Dorsolateral prefrontal cortex (tissue), 120 donors: ENCODE measurements at regions of chr2 and their contacts with region 1.

Region 1: DNA sequence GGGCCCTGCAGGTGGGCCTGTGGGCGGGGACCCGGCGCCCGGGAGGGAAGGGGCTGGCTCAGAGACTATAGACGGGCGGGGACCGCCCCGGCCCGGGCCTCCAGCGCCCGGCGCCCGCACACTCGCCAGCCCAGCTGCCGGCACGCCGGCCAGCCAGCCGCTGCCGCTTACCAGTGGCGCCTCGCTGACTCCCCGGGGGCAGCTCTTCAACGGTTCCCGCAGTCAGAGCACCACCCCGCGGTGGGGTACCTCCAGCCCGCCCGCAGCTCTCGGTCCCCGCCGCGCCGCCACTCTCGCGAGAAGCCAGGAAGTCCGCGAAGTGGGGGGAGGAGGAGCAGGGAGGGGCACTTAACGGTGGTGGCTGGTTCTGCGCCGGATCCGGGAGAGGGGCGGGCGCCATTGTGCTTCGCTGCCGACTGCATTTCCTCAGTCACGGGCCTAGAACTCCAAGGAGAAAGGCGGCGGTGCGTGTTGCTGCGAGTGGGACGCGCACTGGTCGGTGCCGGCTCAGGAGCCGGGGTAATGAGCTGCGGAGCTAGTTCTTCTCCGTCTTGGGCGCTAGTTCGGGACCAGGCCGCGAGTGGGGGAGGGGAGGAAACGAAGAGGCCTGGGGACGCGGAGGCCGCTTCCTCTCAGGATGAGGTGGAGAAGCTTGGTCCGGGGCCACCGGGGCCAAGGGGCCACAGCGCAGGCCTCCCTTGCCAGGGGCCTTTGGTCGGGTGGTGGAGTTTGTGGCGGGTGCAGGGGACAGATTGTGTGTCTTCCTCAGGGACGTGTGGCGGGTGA is at the start of gene MARCHF7:
- DNase-seq: peak; percentile 86 to 97 (median 94)
- H3K4me3 ChIP-seq: peak within 1 kb of the TSS; percentile 68 to 98 (median 92)
- H3K27ac ChIP-seq: peak within 1 kb of the TSS; percentile 84 to 99 (median 96)
- H3K27me3 ChIP-seq: no peaks in the 10 kb centered on the region
- CTCF ChIP-seq: peak in 54 of 56 donors; percentile 35 to 82 (median 60)
- total RNA-seq, gene MARCHF7: 45.9 to 95.4 (median 65.5) TPM

Region 2: DNA sequence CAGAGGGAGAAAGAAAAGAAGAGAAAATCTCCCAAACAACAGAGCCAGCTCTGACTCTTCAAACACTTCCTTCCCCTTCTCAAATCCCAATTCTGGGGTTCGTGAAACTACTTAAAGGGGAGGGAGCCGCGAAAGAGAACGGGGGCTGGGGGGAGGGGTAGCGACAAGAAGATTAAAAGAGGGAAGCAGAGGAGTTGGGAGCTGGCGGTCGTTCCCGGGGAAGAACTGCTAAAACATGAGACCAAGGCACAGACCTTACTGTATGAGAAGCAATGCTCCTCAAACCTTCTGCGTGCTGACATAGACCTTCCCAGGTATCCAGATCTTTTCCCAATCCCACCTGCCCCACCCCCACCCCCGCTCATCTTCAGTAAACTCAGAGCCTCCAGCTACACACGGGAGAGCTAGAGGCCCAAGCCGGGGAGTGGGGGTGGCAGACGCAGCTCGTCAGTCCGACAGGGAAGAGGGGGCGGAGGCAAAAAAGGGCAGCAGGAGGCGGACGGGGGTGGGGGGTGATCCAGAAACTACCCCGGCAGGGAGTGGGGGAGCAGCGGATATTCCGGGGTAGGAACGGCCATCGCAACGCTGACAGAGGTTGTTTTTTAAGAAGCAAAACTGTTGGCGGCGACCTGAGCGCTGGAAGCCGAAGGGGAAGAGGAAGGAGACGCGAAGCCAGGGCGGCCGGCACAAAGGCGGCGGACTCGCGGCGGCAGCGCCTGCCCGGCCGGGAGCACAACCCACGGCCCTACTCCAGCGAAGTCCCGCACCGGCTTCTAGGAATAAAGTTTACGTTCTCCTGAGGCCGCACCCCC is 97.0 kb before region 1 on chr2:
- intact Hi-C with region 1: loop called (anchors 1 to 2 kb)
- DNase-seq: peak; percentile 57 to 89 (median 80)
- H3K4me3 ChIP-seq: peak overlapping the region; percentile 64 to 96 (median 79)
- H3K27ac ChIP-seq: peak overlapping the region; percentile 87 to 100 (median 98)
- H3K27me3 ChIP-seq: no peaks in the 10 kb centered on the region
- CTCF ChIP-seq: peak in 4 of 56 donors; percentile 6 to 15 (median 10)

Region 3: GRCh38 chr2:159658881-159659873 is 53.2 kb before region 1 on chr2:
- intact Hi-C with region 1: no loop called
- DNase-seq: no peak
- H3K4me3 ChIP-seq: no peak overlapping the region
- H3K27ac ChIP-seq: no peak overlapping the region
- H3K27me3 ChIP-seq: no peaks in the 10 kb centered on the region
- CTCF ChIP-seq: no peak